ENCODE measurements at regions of chr3 and their contacts with region 1.

Region 1: GRCh38 chr3:150610790-150611189 is 7.7 kb downstream of the SELENOT start:
- DNase-seq: no peak
- H3K4me3 Mint-ChIP-seq: no peak overlapping the region
- H3K27ac Mint-ChIP-seq: no peak overlapping the region
- H3K4me1 Mint-ChIP-seq: peaks cover 72% of the 10 kb centered on the region
- H3K27me3 Mint-ChIP-seq: no peaks in the 10 kb centered on the region

Region 2: GRCh38 chr3:150582620-150583019 is 28.2 kb before region 1 on chr3:
- CTCF ChIA-PET with region 1: no interaction called
- intact Hi-C with region 1: loop called (anchors 1 kb)
- DNase-seq: no peak
- H3K4me3 Mint-ChIP-seq: no peak overlapping the region
- H3K27ac Mint-ChIP-seq: peak overlapping the region; percentile 81
- H3K4me1 Mint-ChIP-seq: peaks cover 8% of the 10 kb centered on the region
- H3K27me3 Mint-ChIP-seq: no peaks in the 10 kb centered on the region